Dorsolateral prefrontal cortex (tissue), 120 donors: ENCODE measurements at regions of chr2 and their contacts with region 1.

Region 1: DNA sequence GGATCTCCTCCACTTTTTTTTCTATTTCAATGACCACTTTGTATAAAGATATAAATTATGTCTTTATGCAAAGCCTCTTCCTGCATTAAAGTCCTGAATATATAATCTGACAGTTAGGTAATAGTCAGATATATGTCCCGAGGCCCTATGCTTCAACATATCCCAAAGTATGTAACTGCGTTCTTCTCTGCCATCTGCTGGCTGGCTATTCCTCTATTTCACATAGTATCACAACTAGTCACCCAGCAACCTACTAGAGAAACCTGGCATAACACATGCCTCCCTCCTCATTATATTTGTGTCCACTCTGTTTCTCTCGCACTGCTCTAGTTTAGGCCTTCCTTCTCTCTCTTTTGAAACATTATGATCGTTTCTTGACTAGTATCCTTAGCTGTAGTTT is 640.8 kb downstream of the DPP10 start:
- DNase-seq: peak in 3 of 10 donors; percentile 12 to 70 (median 44)
- H3K4me3 ChIP-seq: no peak overlapping the region
- H3K27ac ChIP-seq: peak overlapping the region in 16 of 59 donors; percentile 5 to 77 (median 43)
- H3K27me3 ChIP-seq: no peaks in the 10 kb centered on the region
- CTCF ChIP-seq: peak in 52 of 56 donors; percentile 18 to 71 (median 46)

Region 2: GRCh38 chr2:114472246-114472645 is 611.0 kb before region 1 on chr2:
- intact Hi-C with region 1: no loop called
- DNase-seq: no peak
- H3K4me3 ChIP-seq: no peak overlapping the region
- H3K27ac ChIP-seq: peak overlapping the region in 1 of 59 donors; percentile 13
- H3K27me3 ChIP-seq: peaks cover 0 to 5% (median 0%) of the 10 kb centered on the region in 45 donors
- CTCF ChIP-seq: no peak

Region 3: GRCh38 chr2:114614592-114614991 is 468.6 kb before region 1 on chr2:
- intact Hi-C with region 1: loop called in 1 of 2 experiments (anchors 2 kb)
- DNase-seq: no peak
- H3K4me3 ChIP-seq: no peak overlapping the region
- H3K27ac ChIP-seq: no peak overlapping the region
- H3K27me3 ChIP-seq: peaks cover 0 to 3% (median 0%) of the 10 kb centered on the region in 45 donors
- CTCF ChIP-seq: peak in 35 of 56 donors; percentile 9 to 60 (median 31)

Region 4: GRCh38 chr2:114729026-114729425 is 354.2 kb before region 1 on chr2:
- intact Hi-C with region 1: loop called (anchors 2 kb)
- DNase-seq: no peak
- H3K4me3 ChIP-seq: no peak overlapping the region
- H3K27ac ChIP-seq: peak overlapping the region in 19 of 59 donors; percentile 4 to 62 (median 28)
- H3K27me3 ChIP-seq: no peaks in the 10 kb centered on the region
- CTCF ChIP-seq: peak in 55 of 56 donors; percentile 8 to 81 (median 66)